Right ventricle myocardium inferior (tissue), 1 donor: ENCODE measurements at regions of chr17 and their contacts with region 1.

Region 1: DNA sequence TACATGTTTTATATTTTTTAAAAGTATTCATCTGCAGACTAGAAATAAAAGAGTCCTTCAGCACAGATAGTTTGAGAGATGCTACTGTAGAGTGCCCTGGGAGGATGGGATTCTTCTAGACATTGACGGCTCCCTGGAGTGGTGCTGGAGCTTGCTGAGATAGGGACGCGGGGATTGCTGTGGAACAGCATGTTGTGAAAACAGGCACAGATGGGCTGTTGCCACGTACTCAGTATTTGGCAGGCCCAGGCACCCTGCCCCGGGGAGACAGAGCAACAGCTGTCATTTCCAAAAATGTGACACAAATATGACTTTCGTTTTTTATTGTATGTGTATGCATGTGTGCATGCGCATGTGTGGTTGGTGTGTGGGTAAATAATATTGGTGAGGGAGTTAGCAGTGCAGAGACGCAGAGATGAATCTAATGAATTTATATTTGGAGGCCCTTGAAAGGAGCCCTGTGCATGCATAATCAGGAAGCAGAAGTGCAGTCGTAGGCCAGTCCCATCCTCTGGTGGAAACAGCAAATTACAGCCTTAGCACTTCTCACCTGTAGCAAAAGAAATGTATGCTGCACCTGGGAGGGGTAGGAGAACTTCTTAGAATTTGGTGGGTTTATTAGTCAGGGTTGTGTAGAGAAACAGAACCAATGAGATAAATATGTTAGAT is 6.2 kb upstream of the ABCA8 start:
- DNase-seq: peak; percentile 77
- ATAC-seq: peak; percentile 94

Region 2: GRCh38 chr17:68710035-68710780 is 251.1 kb before region 1 on chr17:
- intact Hi-C with region 1: no loop called
- DNase-seq: no peak
- ATAC-seq: no peak

Region 3: DNA sequence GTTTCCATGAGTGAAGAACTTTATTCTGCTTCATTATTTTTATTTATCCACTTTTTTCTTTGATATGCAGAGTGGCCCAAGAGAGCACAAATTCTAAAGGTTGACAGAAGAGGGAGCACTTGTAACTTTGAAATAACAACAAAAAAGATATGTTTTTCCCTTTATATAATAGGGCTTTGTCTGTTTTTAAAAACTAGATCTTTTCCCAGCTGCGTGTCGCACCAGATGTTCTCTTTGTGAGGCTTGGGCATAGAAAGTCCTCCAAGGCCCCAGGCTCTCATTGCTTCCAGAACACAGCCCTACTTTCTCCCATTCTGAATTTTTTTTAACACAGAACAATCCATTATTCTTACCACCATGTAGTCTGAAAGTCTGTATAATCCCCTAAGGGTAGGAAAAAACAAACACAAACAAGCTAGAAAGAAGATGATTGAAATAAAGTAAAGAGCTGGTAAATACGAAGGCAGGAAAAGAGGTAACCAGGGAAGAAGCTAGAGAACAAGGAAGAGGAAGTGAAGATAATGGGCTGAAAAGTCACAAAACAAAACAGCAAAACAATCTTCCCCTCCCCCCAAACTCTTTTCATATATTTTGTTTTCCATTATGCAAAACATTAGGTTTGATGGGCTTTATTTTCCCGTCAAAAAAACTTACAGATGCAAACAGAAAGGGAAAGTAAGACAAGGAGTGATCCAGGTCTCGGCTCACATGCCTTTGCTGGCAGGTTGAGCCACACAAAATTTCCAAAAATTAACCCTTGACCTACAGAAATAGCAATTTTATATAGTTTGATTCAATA is 166.5 kb before region 1 on chr17:
- intact Hi-C with region 1: loop called (anchors 5 kb)
- DNase-seq: peak; percentile 69
- ATAC-seq: peak; percentile 75

Region 4: GRCh38 chr17:68993112-68993511 is 31.8 kb after region 1 on chr17:
- intact Hi-C with region 1: no loop called
- DNase-seq: no peak
- ATAC-seq: no peak

Region 5: GRCh38 chr17:69018022-69018615 is 56.8 kb after region 1 on chr17:
- intact Hi-C with region 1: no loop called
- DNase-seq: no peak
- ATAC-seq: no peak

Region 6: GRCh38 chr17:69047368-69048263 is 86.3 kb after region 1 on chr17:
- intact Hi-C with region 1: loop called (anchors 10 kb)
- DNase-seq: peak; percentile 81
- ATAC-seq: peak; percentile 95

Region 7: GRCh38 chr17:69414408-69415274 is 453.3 kb after region 1 on chr17 and contains the start of gene MAP2K6:
- intact Hi-C with region 1: no loop called
- DNase-seq: peak; percentile 92
- ATAC-seq: peak; percentile 96
- total RNA-seq, gene MAP2K6: 3.8 TPM